ENCODE measurements at regions of chr6 and their contacts with region 1.

Region 1: GRCh38 chr6:53805725-53806124 is 10.9 kb downstream of the LRRC1 start:
- DNase-seq: no peak
- H3K4me3 ChIP-seq: no peak overlapping the region
- H3K27ac ChIP-seq: no peak overlapping the region
- H3K4me1 ChIP-seq: peaks cover 0 to 72% (median 37%) of the 10 kb centered on the region in 4 donors
- H3K27me3 ChIP-seq: no peaks in the 10 kb centered on the region
- CTCF ChIP-seq: no peak
- EP300 ChIP-seq: no peak
- POLR2A ChIP-seq: no peak

Region 2: DNA sequence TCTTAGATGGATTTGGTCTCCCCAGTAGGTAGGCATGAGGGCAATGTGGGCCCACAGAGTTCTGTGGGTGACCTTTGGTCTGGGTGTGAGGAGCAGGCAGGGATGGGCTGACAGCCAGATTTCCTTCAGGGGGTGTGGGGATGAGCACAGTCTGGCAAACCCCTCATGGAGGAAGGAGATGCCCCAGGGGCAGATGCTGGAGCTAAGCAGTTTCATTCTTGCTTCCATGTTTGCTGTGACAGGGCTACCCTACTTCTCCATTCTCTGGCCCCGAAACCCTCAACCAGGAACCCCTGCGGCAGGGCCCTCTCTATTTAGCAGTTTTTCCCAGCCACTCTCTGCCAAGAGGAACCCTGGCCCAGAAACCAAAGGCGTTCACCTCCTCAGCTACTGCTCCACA is 301.2 kb before region 1 on chr6:
- intact Hi-C with region 1: loop called (anchors 10 kb)
- DNase-seq: no peak
- H3K4me3 ChIP-seq: no peak overlapping the region
- H3K27ac ChIP-seq: no peak overlapping the region
- H3K4me1 ChIP-seq: no peaks in the 10 kb centered on the region
- H3K27me3 ChIP-seq: no peaks in the 10 kb centered on the region
- CTCF ChIP-seq: no peak
- EP300 ChIP-seq: no peak
- POLR2A ChIP-seq: no peak